ENCODE measurements at regions of chr10 and their contacts with region 1.

Region 1: DNA sequence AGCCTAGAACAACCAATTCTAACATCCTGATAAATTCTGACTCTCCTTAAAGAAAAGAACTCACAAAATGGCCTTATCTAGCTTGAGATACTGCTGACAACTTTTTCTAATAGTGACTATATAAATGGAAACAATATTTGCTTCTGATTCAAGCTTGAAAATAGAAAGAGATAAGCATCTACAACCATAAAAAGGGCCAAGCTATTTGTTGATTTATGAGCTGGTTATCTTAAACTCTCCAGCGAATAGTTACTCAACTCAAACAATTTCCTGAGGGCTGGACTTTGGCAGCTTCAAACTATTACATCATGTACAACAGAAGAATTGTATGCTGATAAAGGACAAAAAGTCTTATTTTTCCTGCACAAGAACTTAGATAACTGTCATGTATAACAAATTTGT is 4.6 kb downstream of the USP54 start:
- DNase-seq: peak; percentile 93
- H3K4me3 ChIP-seq: no peak overlapping the region
- H3K27ac ChIP-seq: no peak overlapping the region
- H3K4me1 ChIP-seq: peaks cover 25% of the 10 kb centered on the region
- H3K27me3 ChIP-seq: peaks cover 18 to 25% of the 10 kb centered on the region in 2 experiments
- CTCF ChIP-seq: no peak
- POLR2A ChIP-seq: no peak

Region 2: GRCh38 chr10:73552819-73553715 is 33.5 kb before region 1 on chr10:
- CTCF ChIA-PET with region 1: no interaction called
- POLR2A ChIA-PET with region 1: no interaction called
- dilution Hi-C with region 1: no loop called
- intact Hi-C with region 1: loop called (anchors 5 kb)
- DNase-seq: no peak
- H3K4me3 ChIP-seq: no peak overlapping the region
- H3K27ac ChIP-seq: no peak overlapping the region
- H3K4me1 ChIP-seq: no peaks in the 10 kb centered on the region
- H3K27me3 ChIP-seq: no peaks in the 10 kb centered on the region
- CTCF ChIP-seq: no peak
- POLR2A ChIP-seq: no peak

Region 3: GRCh38 chr10:74738985-74739567 is 1152.5 kb after region 1 on chr10:
- CTCF ChIA-PET with region 1: no interaction called
- POLR2A ChIA-PET with region 1: no interaction called
- dilution Hi-C with region 1: no loop called
- intact Hi-C with region 1: no loop called
- DNase-seq: peak; percentile 57
- H3K4me3 ChIP-seq: no peak overlapping the region
- H3K27ac ChIP-seq: no peak overlapping the region
- H3K4me1 ChIP-seq: peaks cover 9% of the 10 kb centered on the region
- H3K27me3 ChIP-seq: no peaks in the 10 kb centered on the region
- CTCF ChIP-seq: peak; percentile 7 to 27
- POLR2A ChIP-seq: no peak